ENCODE measurements at regions of chr6 and their contacts with region 1.

Region 1: GRCh38 chr6:66993272-66993671 is 1286.2 kb upstream of the EYS start:
- DNase-seq: no peak

Region 2: DNA sequence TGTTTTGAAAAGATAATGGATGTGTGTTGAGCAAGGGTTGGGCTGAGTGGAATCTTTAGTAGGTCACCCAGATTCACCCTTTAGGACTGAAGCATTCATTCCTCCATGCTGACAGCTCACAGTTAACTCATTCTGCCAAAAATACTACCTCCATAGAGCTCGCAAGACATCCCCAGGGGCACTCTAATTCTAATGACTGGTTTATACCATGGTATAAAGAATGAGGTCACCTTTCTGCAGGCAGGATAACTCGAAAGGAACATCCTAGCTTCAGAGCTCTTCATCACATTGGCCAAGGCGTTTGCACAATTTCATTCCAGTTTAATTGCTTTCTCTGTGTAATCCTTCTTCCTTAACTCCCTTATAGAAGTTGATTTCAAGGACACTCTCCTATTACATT is 29.1 kb before region 1 on chr6:
- intact Hi-C with region 1: no loop called
- DNase-seq: no peak

Region 3: GRCh38 chr6:67030861-67031260 is 37.6 kb after region 1 on chr6:
- intact Hi-C with region 1: loop called in 1 of 2 experiments (anchors 5 kb)
- DNase-seq: no peak

Region 4: DNA sequence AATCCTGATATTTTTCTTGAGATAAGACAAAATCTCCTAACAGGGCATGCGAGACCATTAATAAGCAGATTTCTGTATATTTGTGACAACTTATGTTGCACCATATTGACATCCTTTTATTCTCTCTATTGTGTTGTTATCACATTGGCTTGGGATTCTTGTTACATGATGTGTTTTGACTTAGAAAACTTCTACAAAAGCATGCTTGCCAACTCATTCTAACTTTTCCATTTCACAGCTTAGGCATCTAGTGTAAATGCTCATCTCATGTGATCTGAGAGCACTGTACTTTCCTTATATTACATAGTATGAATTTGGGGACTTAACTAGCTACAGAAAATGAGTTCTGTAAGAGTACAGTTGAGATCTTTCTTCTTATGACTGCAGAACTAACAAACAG is 601.1 kb after region 1 on chr6:
- intact Hi-C with region 1: no loop called
- DNase-seq: no peak

Measured in posterior vena cava (tissue), 2 donors.